Adrenal gland (tissue), 19 donors: ENCODE measurements at regions of chr5 and their contacts with region 1.

Region 1: GRCh38 chr5:172235132-172235780 is 41.3 kb downstream of the EFCAB9 start:
- DNase-seq: no peak
- H3K4me3 ChIP-seq: no peak overlapping the region
- H3K27ac ChIP-seq: no peak overlapping the region
- H3K4me1 ChIP-seq: peaks cover 0 to 3% of the 10 kb centered on the region in 2 donors
- H3K27me3 ChIP-seq: no peaks in the 10 kb centered on the region
- CTCF ChIP-seq: no peak
- POLR2A ChIP-seq: no peak

Region 2: GRCh38 chr5:171907725-171908343 is 327.4 kb before region 1 on chr5:
- intact Hi-C with region 1: loop called in 1 of 2 experiments (anchors 5 kb)
- DNase-seq: peak; percentile 23 to 76 (median 44)
- H3K4me3 ChIP-seq: no peak overlapping the region
- H3K27ac ChIP-seq: no peak overlapping the region
- H3K4me1 ChIP-seq: peaks cover 0 to 14% of the 10 kb centered on the region in 2 donors
- H3K27me3 ChIP-seq: no peaks in the 10 kb centered on the region
- CTCF ChIP-seq: peak; percentile 57 to 82 (median 73)
- POLR2A ChIP-seq: no peak

Region 3: GRCh38 chr5:172350212-172351181 is 115.2 kb after region 1 on chr5:
- intact Hi-C with region 1: no loop called
- DNase-seq: peak in 1 of 7 donors; percentile 15
- H3K4me3 ChIP-seq: no peak overlapping the region
- H3K27ac ChIP-seq: no peak overlapping the region
- H3K4me1 ChIP-seq: no peaks in the 10 kb centered on the region
- H3K27me3 ChIP-seq: no peaks in the 10 kb centered on the region
- CTCF ChIP-seq: no peak
- POLR2A ChIP-seq: no peak